Calu3 (cell line): ENCODE measurements at regions of chr3 and their contacts with region 1.

Region 1: DNA sequence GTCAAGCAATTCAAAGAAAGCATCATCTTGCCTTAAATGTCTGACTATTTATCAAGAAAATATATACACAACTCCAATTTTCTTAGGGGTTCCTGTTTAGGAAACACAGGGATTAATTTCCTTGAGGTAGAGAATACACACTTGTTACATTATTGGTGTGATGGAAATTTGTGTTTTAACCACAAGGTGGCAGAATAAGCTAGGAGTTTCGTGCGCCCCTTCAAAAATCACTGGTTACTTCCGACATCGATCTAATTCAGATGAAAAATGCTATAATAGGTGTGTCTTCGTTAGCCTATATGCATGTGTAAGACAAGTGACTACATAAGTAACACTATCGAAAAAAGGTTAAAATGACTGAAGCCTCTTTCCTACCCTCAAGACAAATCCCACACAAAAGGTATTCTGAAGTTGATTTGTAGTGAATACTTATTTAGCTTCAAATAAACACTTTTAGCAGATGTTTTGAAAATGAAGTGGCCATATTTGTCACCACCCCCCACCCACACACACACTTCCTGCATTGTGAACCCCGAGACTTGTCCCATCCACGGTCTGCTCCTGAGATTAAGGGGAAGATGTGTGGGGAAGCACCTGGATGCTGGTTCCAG is 246.5 kb downstream of the ROBO1 start:
- DNase-seq: peak; percentile 45
- H3K4me3 Mint-ChIP-seq: no peak overlapping the region
- H3K27ac Mint-ChIP-seq: no peak overlapping the region
- H3K4me1 Mint-ChIP-seq: peaks cover 5% of the 10 kb centered on the region
- H3K27me3 Mint-ChIP-seq: no peaks in the 10 kb centered on the region
- CTCF ChIP-seq: peak; percentile 23

Region 2: DNA sequence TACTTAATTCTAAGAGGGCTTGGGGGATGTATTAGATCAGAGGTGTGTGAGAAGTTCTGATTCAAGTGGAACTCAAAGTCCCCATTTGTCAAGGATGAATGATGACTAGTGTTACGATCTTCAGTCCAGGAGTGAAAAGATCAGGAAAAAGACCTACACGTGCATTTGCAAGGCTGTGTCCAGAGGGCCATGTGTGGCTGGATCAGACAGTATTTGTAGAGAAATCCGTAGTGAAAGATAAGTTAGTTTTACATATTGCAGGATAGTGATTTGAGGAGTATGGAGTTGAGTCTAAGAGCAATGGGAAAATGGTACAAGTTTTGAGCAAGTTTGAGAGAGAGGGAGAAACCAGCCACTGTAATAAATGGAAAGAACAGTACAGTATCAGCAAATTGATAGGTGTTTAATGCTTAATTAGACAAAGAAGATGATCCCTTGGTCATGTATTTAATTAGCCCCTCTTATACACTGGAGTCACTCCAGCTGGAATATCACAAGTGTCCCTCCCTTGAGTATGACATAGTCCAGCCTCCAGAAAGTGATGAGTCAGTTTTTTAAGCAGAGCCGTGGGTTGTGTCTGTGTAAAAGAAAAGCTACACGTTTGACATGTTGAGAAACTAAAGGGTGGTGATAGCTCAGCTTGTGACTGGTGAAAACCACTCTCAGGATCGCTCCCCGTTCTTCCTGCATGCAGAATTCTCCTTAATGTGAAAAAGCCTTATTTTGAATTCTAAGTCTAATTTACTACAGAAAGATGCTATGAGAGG is 102.3 kb before region 1 on chr3:
- CTCF ChIA-PET with region 1: no interaction called
- intact Hi-C with region 1: no loop called
- DNase-seq: no peak
- H3K4me3 Mint-ChIP-seq: no peak overlapping the region
- H3K27ac Mint-ChIP-seq: no peak overlapping the region
- H3K4me1 Mint-ChIP-seq: peaks cover 8% of the 10 kb centered on the region
- H3K27me3 Mint-ChIP-seq: no peaks in the 10 kb centered on the region
- CTCF ChIP-seq: no peak

Region 3: GRCh38 chr3:79872504-79873159 is 351.3 kb after region 1 on chr3:
- CTCF ChIA-PET with region 1: no interaction called
- intact Hi-C with region 1: loop called (anchors 10 kb)
- DNase-seq: peak; percentile 4
- H3K4me3 Mint-ChIP-seq: no peak overlapping the region
- H3K27ac Mint-ChIP-seq: peak overlapping the region; percentile 77
- H3K4me1 Mint-ChIP-seq: peaks cover 35% of the 10 kb centered on the region
- H3K27me3 Mint-ChIP-seq: no peaks in the 10 kb centered on the region
- CTCF ChIP-seq: no peak

Region 4: DNA sequence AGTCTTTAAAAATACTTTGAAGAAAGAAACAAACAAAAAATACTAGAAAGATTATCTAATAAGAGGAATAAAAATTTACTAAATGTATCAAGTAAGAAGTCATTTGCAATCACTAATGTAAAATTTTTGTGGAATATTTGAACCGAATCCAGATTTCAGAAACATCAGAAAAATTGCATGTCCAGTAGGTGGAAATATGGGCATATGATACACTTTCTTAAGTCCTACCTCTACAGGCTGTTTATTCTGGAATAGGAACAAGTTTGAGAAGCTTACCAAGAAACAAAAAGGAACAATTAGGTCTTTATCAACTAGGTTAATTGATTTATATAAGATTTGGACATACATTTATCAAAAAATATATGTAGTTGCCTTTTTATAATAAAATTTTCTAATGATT is 539.3 kb after region 1 on chr3:
- CTCF ChIA-PET with region 1: no interaction called
- intact Hi-C with region 1: loop called (anchors 10 kb)
- DNase-seq: no peak
- H3K4me3 Mint-ChIP-seq: no peak overlapping the region
- H3K27ac Mint-ChIP-seq: no peak overlapping the region
- H3K4me1 Mint-ChIP-seq: peaks cover 9% of the 10 kb centered on the region
- H3K27me3 Mint-ChIP-seq: no peaks in the 10 kb centered on the region
- CTCF ChIP-seq: no peak

Region 5: DNA sequence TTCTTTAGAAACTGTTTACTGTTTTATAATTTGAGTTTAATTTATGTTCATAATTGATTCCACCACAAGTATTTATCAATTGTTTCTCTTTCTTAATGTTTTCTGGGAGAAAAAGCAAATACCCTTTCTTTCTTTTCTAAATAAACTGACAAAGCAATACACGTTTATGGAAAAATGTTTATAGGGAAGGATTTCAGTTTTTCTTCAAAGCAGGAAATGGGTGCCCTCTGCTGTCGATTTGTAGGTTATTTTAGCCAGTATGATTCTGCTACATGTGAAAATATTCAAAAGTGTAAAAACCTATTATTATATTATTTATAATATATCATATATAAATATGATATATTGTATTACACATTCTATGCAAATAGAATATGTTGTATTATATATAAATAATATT is 1167.5 kb after region 1 on chr3:
- CTCF ChIA-PET with region 1: no interaction called
- intact Hi-C with region 1: loop called (anchors 1 kb)
- DNase-seq: peak; percentile 17
- H3K4me3 Mint-ChIP-seq: no peak overlapping the region
- H3K27ac Mint-ChIP-seq: no peak overlapping the region
- H3K4me1 Mint-ChIP-seq: no peaks in the 10 kb centered on the region
- H3K27me3 Mint-ChIP-seq: no peaks in the 10 kb centered on the region
- CTCF ChIP-seq: peak; percentile 28